ENCODE measurements at regions of chr5 and their contacts with region 1.

Region 1: DNA sequence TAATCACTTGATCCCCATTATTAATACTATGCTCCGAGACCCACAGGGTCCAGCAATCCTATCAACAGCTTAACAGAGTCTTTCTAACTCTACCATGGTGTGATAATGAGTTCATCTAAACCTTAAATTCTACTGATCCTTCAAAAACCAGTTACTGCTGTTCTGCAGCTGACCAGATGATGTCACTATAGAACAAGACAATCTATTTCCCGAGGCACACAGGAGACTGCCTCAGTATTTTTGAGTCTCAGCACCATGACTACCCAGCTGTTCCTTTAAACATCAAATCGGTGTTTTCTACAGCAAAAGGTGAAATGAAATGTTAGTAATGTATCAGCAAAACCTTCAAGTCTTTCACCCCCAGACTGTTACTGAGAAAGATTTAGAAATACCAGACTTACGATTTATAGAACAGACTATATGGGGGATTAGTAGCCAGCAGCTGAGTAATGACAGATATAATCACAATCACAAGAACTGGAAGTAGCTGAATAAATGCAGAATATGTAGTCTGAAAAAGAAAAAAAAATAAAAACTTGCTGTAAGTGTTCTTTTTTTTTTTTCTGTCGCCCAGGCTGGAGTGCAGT is 16.9 kb downstream of the DNAJC18 start:
- DNase-seq: peak; percentile 33
- H3K4me3 ChIP-seq: no peak overlapping the region
- H3K27ac ChIP-seq: no peak overlapping the region
- H3K4me1 ChIP-seq: no peaks in the 10 kb centered on the region
- H3K27me3 ChIP-seq: no peaks in the 10 kb centered on the region
- CTCF ChIP-seq: peak; percentile 32 to 85 (median 62)
- POLR2A ChIP-seq: no peak

Region 2: GRCh38 chr5:139368613-139369012 is 53.8 kb before region 1 on chr5:
- intact Hi-C with region 1: no loop called
- DNase-seq: no peak
- H3K4me3 ChIP-seq: no peak overlapping the region
- H3K27ac ChIP-seq: no peak overlapping the region
- H3K4me1 ChIP-seq: no peaks in the 10 kb centered on the region
- H3K27me3 ChIP-seq: no peaks in the 10 kb centered on the region
- CTCF ChIP-seq: no peak
- POLR2A ChIP-seq: no peak

Region 3: DNA sequence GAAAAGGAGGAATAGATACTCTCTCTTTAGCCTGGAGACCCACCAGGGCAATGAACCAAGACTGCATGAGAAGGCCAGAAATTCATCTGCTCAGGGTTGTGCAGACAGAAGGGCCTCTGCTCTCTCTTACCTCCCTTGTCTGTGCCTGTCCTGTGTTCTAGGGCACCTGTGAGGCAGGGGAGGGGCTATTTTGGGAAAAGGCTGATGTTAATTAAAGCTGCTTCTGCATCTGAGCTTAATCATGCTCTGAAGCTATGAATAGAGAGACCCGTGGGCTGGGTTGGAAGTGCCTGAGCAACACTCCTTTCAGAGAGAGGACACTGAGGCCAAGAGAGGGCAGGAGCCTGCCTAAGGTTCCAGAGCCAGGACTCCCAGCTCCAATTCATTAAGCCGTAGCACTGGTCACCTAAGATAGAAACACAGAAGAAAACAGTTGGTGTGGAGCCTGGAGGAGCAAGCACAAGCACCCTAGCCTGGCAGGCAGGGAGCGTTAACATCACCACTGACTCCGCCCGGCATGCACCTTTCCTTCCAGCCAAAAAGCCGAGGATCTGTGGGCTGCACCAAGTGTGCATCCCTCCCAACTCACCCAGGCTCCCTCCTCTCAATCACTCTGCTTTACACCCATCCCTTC is 91.6 kb after region 1 on chr5:
- intact Hi-C with region 1: loop called (anchors 5 kb)
- DNase-seq: no peak
- H3K4me3 ChIP-seq: no peak overlapping the region
- H3K27ac ChIP-seq: no peak overlapping the region
- H3K4me1 ChIP-seq: no peaks in the 10 kb centered on the region
- H3K27me3 ChIP-seq: no peaks in the 10 kb centered on the region
- CTCF ChIP-seq: no peak
- POLR2A ChIP-seq: no peak